ENCODE measurements at regions of chr17 and their contacts with region 1.

Region 1: GRCh38 chr17:46191322-46192188 is 1.7 kb downstream of the KANSL1 start:
- DNase-seq: peak; percentile 25
- H3K4me3 ChIP-seq: peak overlapping the region; percentile 95 to 98
- H3K27ac ChIP-seq: peak overlapping the region; percentile 100
- H3K4me1 ChIP-seq: no peaks in the 10 kb centered on the region
- H3K27me3 ChIP-seq: no peaks in the 10 kb centered on the region
- CTCF ChIP-seq: no peak
- POLR2A ChIP-seq: peak; percentile 35

Region 2: DNA sequence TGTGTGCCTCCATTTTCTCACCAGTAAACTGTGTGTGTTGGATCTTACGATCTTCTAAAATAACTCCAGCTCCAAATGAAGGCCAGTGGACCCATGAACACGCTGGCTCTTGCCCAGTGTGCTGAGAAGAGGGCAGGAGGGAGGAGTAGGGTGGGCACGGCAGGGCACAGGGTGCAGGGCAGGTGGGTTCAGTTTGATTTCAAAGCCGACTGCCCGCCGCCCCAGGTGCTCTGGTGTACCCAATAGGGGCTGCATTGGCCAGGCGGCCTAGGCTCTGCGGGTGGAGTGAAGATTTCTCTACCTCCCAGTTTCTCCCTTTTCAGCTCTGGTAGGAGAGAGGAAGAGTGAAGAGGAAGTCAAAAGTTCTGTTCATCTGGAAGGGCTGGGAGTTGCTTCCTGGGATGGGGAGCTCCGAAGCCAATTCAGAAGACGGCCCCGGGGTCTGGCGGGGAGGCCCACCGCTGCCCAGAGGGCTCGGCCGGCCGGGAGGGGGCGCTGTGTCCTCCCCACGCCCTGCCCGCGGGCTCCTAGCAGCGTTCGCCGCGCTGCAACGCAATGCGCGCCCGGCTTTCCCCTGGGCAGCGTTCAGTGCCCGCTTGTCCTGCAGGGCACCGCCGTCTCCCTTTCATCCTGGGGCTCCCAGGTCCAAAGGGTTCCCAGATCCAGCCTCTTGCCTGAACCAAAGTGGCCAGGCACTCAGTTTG is 408.5 kb before region 1 on chr17:
- intact Hi-C with region 1: no loop called
- DNase-seq: no peak
- H3K4me3 ChIP-seq: peak overlapping the region; percentile 32 to 53
- H3K27ac ChIP-seq: no peak overlapping the region
- H3K4me1 ChIP-seq: peaks cover 6% of the 10 kb centered on the region
- H3K27me3 ChIP-seq: no peaks in the 10 kb centered on the region
- CTCF ChIP-seq: peak; percentile 27 to 56 (median 42)
- POLR2A ChIP-seq: no peak

Region 3: DNA sequence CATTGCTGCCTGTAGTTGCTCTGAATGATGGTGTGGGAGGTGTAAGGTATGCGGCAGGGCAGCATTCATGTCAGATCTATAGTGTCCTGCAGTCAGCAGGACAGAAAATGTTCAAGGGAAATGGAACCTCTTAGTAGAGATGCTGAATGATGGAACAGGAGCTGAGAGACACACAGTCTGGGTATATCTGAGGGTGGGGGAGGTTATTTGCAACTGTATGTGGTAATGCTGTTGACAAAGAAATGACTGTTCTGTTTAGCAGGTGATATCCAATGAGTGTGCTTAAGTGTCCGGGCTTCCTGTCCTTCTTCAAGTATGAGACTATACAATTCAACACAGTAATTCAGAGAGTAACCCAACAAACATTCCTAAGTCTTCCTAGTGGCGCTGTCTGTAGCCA is 145.9 kb before region 1 on chr17:
- intact Hi-C with region 1: loop called (anchors 1 kb)
- DNase-seq: no peak
- H3K4me3 ChIP-seq: no peak overlapping the region
- H3K27ac ChIP-seq: no peak overlapping the region
- H3K4me1 ChIP-seq: no peaks in the 10 kb centered on the region
- H3K27me3 ChIP-seq: no peaks in the 10 kb centered on the region
- CTCF ChIP-seq: no peak
- POLR2A ChIP-seq: no peak

Region 4: DNA sequence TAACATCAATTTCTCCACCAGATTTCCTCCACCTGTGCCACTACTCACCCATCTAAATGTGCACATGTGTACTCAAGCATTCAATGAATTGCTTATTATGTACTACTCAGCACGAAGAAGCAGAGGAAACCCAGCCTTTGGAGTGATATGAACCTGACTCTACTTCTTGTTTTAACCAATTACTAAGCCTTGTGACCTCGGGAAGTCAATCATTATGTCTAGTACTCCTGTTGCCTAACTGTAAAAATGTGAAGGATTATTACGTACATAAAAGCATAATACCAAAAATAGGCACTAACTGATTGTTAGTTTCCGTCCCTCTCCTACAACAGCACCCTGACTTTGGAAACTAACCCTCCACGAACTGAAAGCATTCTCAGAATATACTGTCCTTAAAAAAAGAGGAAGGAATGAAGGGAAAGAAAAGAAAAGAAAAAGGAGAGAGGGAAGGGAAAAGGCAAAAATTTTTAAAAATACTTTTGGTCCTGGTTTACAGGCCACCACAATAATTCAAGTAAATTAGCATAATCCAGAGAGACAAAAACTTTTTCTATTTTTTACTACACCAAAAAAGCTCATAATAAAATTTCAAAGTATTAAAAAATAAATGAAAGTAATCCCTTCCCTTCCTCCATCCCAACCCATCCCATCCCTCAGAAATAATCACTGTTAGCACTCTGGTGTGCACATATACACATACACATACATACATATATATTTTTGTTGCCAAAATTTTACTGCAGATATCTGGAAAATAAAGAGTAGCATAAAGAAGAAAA is 51.9 kb before region 1 on chr17:
- intact Hi-C with region 1: no loop called
- DNase-seq: no peak
- H3K4me3 ChIP-seq: no peak overlapping the region
- H3K27ac ChIP-seq: no peak overlapping the region
- H3K4me1 ChIP-seq: no peaks in the 10 kb centered on the region
- H3K27me3 ChIP-seq: no peaks in the 10 kb centered on the region
- CTCF ChIP-seq: no peak
- POLR2A ChIP-seq: no peak

Measured in prostate gland (tissue), 2 donors.